ENCODE measurements at regions of chr7 and their contacts with region 1.

Region 1: DNA sequence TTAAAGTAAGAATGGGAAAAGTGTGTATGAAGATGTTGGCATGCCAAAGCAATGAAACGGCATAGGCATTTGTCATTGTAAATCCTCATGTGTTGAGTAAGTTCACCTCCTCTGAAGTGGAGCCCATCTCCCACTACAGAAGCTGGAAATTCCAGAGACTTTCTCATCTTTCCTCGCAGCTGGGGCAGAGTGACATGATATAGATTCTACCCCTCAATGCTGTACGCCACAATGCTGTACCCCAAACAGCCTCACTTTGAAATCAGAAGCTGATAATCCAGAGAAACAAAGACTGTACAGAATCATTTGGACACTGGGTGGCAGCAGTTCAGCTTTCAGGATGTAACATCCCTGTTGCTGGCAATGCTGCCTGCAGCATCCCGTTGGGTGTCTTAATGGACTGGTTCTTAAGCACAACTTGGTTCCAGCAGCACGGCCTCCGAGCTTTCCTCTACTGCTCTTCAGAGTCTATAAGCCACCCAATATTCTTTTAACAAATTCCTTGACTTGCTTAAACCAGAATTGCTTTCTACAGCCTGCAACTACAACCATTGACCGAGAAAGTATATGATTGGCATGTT is 18.8 kb downstream of the ZC3HAV1L start:
- DNase-seq: no peak
- H3K4me3 ChIP-seq: no peak overlapping the region
- H3K27ac ChIP-seq: no peak overlapping the region
- H3K4me1 ChIP-seq: no peaks in the 10 kb centered on the region
- H3K27me3 ChIP-seq: no peaks in the 10 kb centered on the region
- CTCF ChIP-seq: peak; percentile 43 to 64 (median 57)
- EP300 ChIP-seq: no peak
- POLR2A ChIP-seq: no peak

Region 2: DNA sequence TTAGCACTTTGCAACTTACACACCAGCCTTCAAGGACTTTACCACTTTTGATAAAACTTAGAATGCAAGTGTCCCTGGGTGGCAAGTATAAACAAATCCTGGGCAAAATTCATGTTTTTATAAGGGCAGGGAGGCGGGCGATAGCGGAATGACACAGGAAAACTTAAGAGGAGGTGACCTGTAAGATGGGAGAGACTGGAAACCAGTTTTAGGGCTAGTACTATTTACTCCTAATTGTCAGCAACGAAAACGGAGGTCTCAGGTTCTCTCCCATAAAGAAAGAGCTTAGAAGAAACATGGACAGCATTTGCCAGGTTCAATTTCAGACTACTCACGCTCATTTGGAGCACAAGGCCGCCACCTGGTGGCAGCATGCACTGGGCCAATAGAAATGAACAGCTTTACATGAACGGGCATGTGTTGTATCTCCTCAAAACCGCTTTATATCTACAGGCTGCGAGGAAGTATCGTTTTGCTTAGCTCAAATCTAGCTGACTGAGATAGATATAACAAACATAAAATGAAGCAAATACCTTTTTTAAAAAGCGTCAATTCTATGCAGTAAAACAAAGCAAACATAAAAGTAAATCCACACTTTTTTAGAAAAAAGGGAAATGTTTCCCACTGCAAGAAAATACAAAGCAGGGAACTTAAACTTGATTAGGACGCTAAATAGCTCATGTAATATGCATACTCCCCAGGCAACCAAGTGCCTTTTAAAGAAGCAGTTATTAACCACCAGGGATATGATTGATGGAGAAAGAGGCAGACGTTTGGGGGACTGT is 278.3 kb before region 1 on chr7:
- intact Hi-C with region 1: no loop called
- DNase-seq: no peak
- H3K4me3 ChIP-seq: no peak overlapping the region
- H3K27ac ChIP-seq: no peak overlapping the region
- H3K4me1 ChIP-seq: no peaks in the 10 kb centered on the region
- H3K27me3 ChIP-seq: no peaks in the 10 kb centered on the region
- CTCF ChIP-seq: peak; percentile 62 to 80 (median 73)
- EP300 ChIP-seq: no peak
- POLR2A ChIP-seq: no peak

Region 3: GRCh38 chr7:139075031-139075652 is 58.1 kb after region 1 on chr7:
- intact Hi-C with region 1: loop called (anchors 5 kb)
- DNase-seq: peak; percentile 92
- H3K4me3 ChIP-seq: no peak overlapping the region
- H3K27ac ChIP-seq: peak overlapping the region in 2 of 4 donors; percentile 34 to 42
- H3K4me1 ChIP-seq: peaks cover 0 to 6% (median 3%) of the 10 kb centered on the region in 4 donors
- H3K27me3 ChIP-seq: no peaks in the 10 kb centered on the region
- CTCF ChIP-seq: peak; percentile 74 to 86 (median 86)
- EP300 ChIP-seq: no peak
- POLR2A ChIP-seq: no peak